Heart right ventricle (tissue), 16 donors: ENCODE measurements at regions of chr11 and their contacts with region 1.

Region 1: GRCh38 chr11:83071567-83072349 is at the start of gene RAB30:
- DNase-seq: peak; percentile 87 to 99
- ATAC-seq: peak; percentile 97 to 99 (median 98)
- H3K4me3 ChIP-seq: peak within 1 kb of the TSS; percentile 60 to 89 (median 74)
- H3K27ac ChIP-seq: peak within 1 kb of the TSS; percentile 71 to 95 (median 92)
- H3K4me1 ChIP-seq: peaks cover 2 to 65% (median 48%) of the 10 kb centered on the region in 9 donors
- H3K27me3 ChIP-seq: peaks cover 0 to 12% (median 0%) of the 10 kb centered on the region in 7 donors
- CTCF ChIP-seq: no peak
- total RNA-seq, gene RAB30: 20.2 to 29.4 (median 22.0) TPM

Region 2: DNA sequence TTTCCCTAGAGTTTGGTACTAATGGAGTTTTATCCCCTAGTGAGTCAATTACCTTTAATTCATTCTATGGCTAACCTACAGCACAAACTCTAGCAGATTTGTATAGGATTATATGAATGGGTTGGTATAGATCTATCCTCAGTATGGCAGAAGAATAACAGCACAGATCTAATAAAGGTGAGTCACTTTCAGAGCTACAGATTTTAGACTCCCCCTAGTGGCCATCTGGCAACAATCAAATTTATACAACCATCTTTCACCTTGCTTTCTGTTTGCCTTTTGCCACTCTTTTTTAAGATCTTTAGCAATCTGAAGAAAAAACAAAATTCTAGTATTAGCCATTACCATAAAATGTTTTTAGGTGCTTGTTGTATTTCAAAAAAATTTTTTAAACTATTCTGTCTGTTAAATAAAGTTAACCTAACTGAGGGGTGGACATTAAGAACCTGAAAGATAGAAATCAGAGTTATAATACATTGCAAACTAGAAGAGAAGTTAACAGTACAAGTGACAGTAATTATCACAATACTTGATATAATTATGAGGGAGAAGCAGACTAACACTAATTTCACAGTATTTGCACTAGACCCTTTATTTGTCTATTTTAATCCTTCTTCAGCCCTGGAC is 144.4 kb before region 1 on chr11:
- intact Hi-C with region 1: loop called in 2 of 10 experiments (anchors 5 to 10 kb)
- DNase-seq: peak in 1 of 2 donors; percentile 20
- ATAC-seq: peak in 2 of 8 donors; percentile 51 to 63
- H3K4me3 ChIP-seq: no peak overlapping the region
- H3K27ac ChIP-seq: no peak overlapping the region
- H3K4me1 ChIP-seq: peaks cover 0 to 12% (median 0%) of the 10 kb centered on the region in 9 donors
- H3K27me3 ChIP-seq: no peaks in the 10 kb centered on the region
- CTCF ChIP-seq: peak in 8 of 9 donors; percentile 68 to 89 (median 80)

Region 3: GRCh38 chr11:82996966-82997606 is 74.7 kb before region 1 on chr11:
- intact Hi-C with region 1: loop called in 4 of 10 experiments (anchors 5 kb)
- DNase-seq: no peak
- ATAC-seq: no peak
- H3K4me3 ChIP-seq: no peak overlapping the region
- H3K27ac ChIP-seq: peak overlapping the region in 6 of 10 donors; percentile 0 to 78 (median 56)
- H3K4me1 ChIP-seq: peaks cover 0 to 90% (median 58%) of the 10 kb centered on the region in 9 donors
- H3K27me3 ChIP-seq: no peaks in the 10 kb centered on the region
- CTCF ChIP-seq: no peak

Region 4: DNA sequence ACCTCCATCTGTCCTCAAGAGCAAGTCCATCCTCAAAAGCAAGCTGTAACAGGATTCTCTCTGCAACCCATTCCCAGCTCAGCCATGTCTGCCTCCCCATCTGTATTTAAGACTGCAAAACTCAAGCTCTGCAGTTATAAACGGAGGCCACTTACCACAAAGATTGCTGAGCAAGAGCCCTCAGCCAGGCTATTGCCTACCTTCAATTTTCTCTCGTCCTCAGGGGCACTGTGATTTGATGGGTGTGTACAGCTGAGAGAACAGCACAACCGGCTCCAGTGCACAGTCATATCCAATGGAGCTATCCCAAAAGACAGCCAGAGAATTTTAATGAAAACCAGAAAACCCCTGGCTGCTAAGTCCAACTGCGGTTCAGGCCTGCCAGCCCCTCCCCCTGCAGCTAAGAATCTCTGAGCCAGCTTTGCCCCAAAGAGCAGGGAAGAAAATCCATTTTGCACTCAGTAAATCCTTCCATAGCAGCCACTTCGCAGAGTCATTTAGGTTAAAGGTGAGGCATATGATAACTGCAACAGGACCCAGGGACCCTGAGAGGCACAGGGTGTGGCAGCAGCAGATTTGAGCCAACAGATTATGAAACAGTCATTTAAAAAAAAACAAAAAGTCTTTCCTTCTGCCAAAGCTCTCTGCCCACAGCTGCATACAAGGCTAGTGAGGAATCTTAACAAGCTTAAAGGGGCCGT is 37.6 kb before region 1 on chr11:
- intact Hi-C with region 1: loop called in 3 of 10 experiments (anchors 1 to 5 kb)
- DNase-seq: peak; percentile 24 to 30
- ATAC-seq: peak; percentile 83 to 92 (median 90)
- H3K4me3 ChIP-seq: peak overlapping the region; percentile 8 to 47 (median 40)
- H3K27ac ChIP-seq: peak overlapping the region; percentile 32 to 89 (median 80)
- H3K4me1 ChIP-seq: peaks cover 2 to 78% (median 58%) of the 10 kb centered on the region in 9 donors
- H3K27me3 ChIP-seq: no peaks in the 10 kb centered on the region
- CTCF ChIP-seq: no peak

Region 5: GRCh38 chr11:83193315-83194280 is 121.8 kb after region 1 on chr11 and contains the start of gene ANKRD42:
- intact Hi-C with region 1: loop called in 2 of 10 experiments (anchors 5 to 10 kb)
- DNase-seq: peak; percentile 88 to 96
- ATAC-seq: peak; percentile 97 to 99 (median 98)
- H3K4me3 ChIP-seq: peak within 1 kb of the TSS; percentile 63 to 90 (median 80)
- H3K27ac ChIP-seq: peak within 1 kb of the TSS; percentile 37 to 96 (median 90)
- H3K4me1 ChIP-seq: peaks cover 7 to 39% (median 30%) of the 10 kb centered on the region in 9 donors
- H3K27me3 ChIP-seq: no peaks in the 10 kb centered on the region
- CTCF ChIP-seq: no peak
- total RNA-seq, gene ANKRD42: 3.7 to 10.7 (median 6.4) TPM